ENCODE measurements at regions of chr5 and their contacts with region 1.

Region 1: DNA sequence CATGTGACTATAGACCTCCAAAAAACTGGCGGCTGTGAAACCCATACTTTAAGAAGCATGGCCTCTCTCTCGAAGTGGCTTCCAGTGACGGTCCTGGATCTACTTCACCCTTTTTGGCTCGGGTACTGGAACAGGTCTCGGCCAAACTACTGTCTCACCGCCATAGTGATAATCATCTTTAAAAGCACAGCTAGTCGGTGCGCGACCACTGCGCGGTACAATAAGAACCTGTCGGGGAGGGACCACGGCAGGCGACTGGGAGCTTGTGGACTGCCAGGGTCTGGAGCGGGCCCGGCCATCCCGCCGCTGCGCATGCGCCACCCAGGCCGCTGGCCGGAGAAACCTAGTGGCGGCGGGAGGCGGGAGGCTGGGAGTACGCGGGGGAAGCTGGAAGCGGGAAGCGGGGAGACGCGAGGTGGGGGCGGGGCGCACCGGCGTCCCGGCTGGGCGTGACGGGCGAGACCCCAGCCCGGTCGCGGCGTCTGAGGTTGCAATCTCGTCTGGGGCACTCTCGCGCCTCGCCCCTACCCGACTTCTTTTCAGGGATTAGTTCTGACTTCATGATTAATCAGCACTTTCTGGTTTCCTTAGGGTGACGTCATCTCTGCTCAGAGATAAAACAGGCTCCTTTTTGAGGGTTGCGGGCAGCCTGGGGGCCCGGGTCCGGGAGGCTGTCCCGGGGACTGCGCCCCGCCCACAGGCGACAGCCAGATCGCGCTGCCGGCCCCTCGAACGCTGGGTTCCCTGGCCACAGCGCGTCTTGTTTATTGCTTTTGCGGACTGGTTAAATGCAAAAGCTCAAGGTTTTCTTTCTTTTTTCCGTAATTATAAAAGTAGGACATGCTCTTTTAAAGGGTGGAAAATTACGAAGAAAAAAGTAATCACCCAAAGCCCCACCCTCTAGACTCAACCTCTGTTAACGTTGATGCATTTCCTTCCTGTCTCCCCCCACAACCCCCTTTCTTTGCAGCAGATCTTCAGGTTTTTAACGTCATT is 266.8 kb downstream of the CWC27 start:
- DNase-seq: peak; percentile 71 to 93
- ATAC-seq: peak; percentile 85 to 92 (median 86)
- H3K4me3 ChIP-seq: peak overlapping the region; percentile 52
- H3K4me3 Mint-ChIP-seq: peak overlapping the region; percentile 87
- H3K27ac ChIP-seq: peak overlapping the region; percentile 85
- H3K27ac Mint-ChIP-seq: peak overlapping the region; percentile 86 to 94
- H3K4me1 ChIP-seq: peaks cover 15% of the 10 kb centered on the region
- H3K4me1 Mint-ChIP-seq: peaks cover 24 to 33% of the 10 kb centered on the region in 2 donors
- H3K27me3 ChIP-seq: no peaks in the 10 kb centered on the region
- H3K27me3 Mint-ChIP-seq: peaks cover 0 to 3% of the 10 kb centered on the region in 2 donors
- CTCF ChIP-seq: no peak

Region 2: DNA sequence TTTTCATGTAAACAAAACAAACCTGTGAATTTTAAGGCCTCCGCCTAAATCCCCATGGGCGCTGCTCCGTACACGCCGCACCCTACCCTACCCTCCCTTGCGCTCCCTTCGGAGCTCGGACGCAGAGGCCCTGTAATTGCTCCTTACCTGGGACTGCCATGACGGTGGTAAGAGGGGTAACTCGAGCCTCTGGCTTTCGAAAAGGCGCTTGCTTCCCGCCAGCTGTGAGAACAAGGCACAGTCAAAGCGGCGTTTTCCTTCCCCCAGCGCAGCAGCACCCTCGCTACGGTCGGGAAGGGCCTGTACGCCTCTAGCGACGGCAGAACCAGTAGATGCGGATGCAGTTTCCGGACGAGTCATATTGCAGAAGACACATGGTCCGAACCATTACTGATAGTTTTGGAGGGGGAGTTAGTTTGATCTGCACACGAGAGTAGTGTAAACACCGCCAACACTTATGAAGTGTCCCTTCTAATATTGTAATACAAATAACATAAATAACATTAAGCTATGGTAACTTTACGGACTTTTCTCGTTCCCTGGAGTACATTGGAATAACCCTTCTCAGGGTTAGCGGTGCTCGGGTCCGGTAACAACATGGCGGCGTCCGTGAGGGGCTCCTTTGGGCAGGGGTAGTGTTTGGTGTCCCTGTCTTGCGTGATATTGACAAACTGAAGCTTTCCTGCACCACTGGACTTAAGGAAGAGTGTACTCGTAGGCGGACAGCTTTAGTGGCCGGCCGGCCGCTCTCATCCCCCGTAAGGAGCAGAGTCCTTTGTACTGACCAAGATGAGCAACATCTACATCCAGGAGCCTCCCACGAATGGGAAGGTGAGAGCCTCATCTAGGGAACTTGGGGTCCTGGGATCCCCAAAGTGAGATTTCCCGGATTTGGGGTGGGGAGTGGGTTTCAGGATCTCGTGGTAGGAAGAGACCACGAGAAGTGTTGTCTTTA is 266.9 kb before region 1 on chr5 and contains the starts of genes CWC27 and SREK1IP1:
- intact Hi-C with region 1: loop called (anchors 5 kb)
- DNase-seq: peak; percentile 71 to 92
- ATAC-seq: peak; percentile 94 to 97 (median 97)
- H3K4me3 ChIP-seq: peak within 1 kb of the TSS; percentile 96
- H3K4me3 Mint-ChIP-seq: peak within 1 kb of the TSS; percentile 98
- H3K27ac ChIP-seq: peak within 1 kb of the TSS; percentile 80
- H3K27ac Mint-ChIP-seq: peak within 1 kb of the TSS; percentile 95 to 97
- H3K4me1 ChIP-seq: peaks cover 18% of the 10 kb centered on the region
- H3K4me1 Mint-ChIP-seq: peaks cover 43 to 58% of the 10 kb centered on the region in 2 donors
- H3K27me3 ChIP-seq: no peaks in the 10 kb centered on the region
- H3K27me3 Mint-ChIP-seq: no peaks in the 10 kb centered on the region
- CTCF ChIP-seq: no peak
- total RNA-seq, gene CWC27: 21.6 to 26.3 (median 25.7) TPM
- total RNA-seq, gene SREK1IP1: 20.2 to 28.0 (median 24.4) TPM

Region 3: GRCh38 chr5:65102828-65103711 is 67.6 kb after region 1 on chr5:
- intact Hi-C with region 1: loop called (anchors 5 kb)
- DNase-seq: peak; percentile 49 to 79
- ATAC-seq: peak; percentile 81 to 82 (median 82)
- H3K4me3 ChIP-seq: peak overlapping the region; percentile 79
- H3K4me3 Mint-ChIP-seq: peak overlapping the region; percentile 86
- H3K27ac ChIP-seq: peak overlapping the region; percentile 86
- H3K27ac Mint-ChIP-seq: peak overlapping the region; percentile 72 to 82
- H3K4me1 ChIP-seq: peaks cover 15% of the 10 kb centered on the region
- H3K4me1 Mint-ChIP-seq: peaks cover 26 to 33% of the 10 kb centered on the region in 2 donors
- H3K27me3 ChIP-seq: no peaks in the 10 kb centered on the region
- H3K27me3 Mint-ChIP-seq: peaks cover 0 to 3% of the 10 kb centered on the region in 2 donors
- CTCF ChIP-seq: no peak